ENCODE measurements at regions of chr6 and their contacts with region 1.

Region 1: GRCh38 chr6:15621203-15622044 is 41.4 kb downstream of the DTNBP1 start:
- DNase-seq: peak; percentile 37 to 96 (median 64)
- ATAC-seq: peak; percentile 99
- H3K4me3 ChIP-seq: no peak overlapping the region
- H3K27ac ChIP-seq: peak overlapping the region; percentile 85
- H3K4me1 ChIP-seq: peaks cover 4 to 33% of the 10 kb centered on the region in 2 experiments
- H3K27me3 ChIP-seq: no peaks in the 10 kb centered on the region
- CTCF ChIP-seq: no peak
- EP300 ChIP-seq: peak; percentile 39; the same call in 1 of the 2 replicates
- POLR2A ChIP-seq: peak; percentile 78
- RAD21 ChIP-seq: peak in 1 of 2 experiments; percentile 51; a peak in 2 of 4 replicates

Region 2: GRCh38 chr6:15399641-15400470 is 221.6 kb before region 1 on chr6:
- CTCF ChIA-PET with region 1: no interaction called
- POLR2A ChIA-PET with region 1: no interaction called
- in situ Hi-C with region 1: no loop called
- intact Hi-C with region 1: loop called (anchors 2 kb)
- DNase-seq: peak; percentile 82 to 91 (median 86)
- ATAC-seq: peak; percentile 83
- H3K4me3 ChIP-seq: peak overlapping the region; percentile 29
- H3K27ac ChIP-seq: peak overlapping the region; percentile 64
- H3K4me1 ChIP-seq: peaks cover 13 to 63% of the 10 kb centered on the region in 2 experiments; a peak in 4 of 5 replicates
- H3K27me3 ChIP-seq: no peaks in the 10 kb centered on the region
- CTCF ChIP-seq: no peak
- EP300 ChIP-seq: peak; percentile 37; the same call in 1 of the 2 replicates
- POLR2A ChIP-seq: no peak
- RAD21 ChIP-seq: no peak

Region 3: GRCh38 chr6:15516018-15516375 is 105.4 kb before region 1 on chr6:
- CTCF ChIA-PET with region 1: no interaction called
- POLR2A ChIA-PET with region 1: no interaction called
- in situ Hi-C with region 1: no loop called
- intact Hi-C with region 1: loop called (anchors 1 kb)
- DNase-seq: no peak
- ATAC-seq: no peak
- H3K4me3 ChIP-seq: no peak overlapping the region
- H3K27ac ChIP-seq: no peak overlapping the region
- H3K4me1 ChIP-seq: peaks cover 0 to 27% of the 10 kb centered on the region in 2 experiments; a peak in 2 of 5 replicates
- H3K27me3 ChIP-seq: no peaks in the 10 kb centered on the region
- CTCF ChIP-seq: peak in 1 of 3 experiments; percentile 14; a peak in 1 of 6 replicates
- EP300 ChIP-seq: no peak
- POLR2A ChIP-seq: no peak
- RAD21 ChIP-seq: peak in 1 of 2 experiments; percentile 48; a peak in 2 of 4 replicates

Region 4: DNA sequence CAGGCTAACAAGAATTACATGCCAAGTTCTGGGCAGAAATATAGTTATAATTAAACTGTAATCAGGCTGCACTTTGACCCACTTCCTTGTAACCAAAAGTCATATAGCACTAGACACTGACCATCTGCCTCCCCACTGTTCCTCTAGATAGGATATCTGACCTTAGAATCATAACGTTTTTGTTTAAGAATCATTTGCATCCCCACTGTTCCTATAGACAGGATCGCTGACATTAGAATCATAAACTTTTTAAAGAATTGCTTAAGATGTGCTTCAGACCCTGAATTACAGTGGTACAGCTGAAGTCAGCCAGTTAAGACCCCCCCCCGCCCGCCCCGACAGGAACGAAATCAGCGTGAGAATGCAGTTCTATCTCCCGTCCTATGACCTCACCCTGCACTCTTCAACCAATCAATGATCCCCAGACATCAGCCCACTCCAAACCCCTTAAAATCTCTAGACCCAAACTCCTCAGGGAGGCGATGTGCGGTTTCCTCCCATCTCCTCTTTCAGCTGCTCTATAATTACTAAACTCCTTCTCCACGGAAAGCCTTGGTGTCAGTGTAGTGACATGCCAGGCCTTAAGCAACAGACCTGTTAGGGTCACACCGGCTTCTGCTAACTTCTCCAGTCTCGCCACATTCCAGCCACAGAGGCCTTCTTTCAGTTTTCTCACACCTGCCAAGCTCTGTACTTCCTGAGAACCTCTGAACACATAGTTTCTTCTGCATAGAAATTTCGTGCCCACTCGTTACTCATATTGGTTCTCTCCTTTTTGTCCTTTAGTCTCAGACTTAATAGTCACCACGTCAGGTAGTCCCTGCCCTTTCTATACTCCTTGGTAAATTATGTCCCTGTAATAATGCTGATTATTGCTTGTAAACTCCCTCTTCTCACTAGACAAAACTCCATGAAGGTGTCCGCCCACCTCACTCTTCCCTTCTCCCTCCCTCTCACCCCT is 52.1 kb before region 1 on chr6:
- CTCF ChIA-PET with region 1: no interaction called
- POLR2A ChIA-PET with region 1: no interaction called
- in situ Hi-C with region 1: no loop called
- intact Hi-C with region 1: loop called (anchors 1 kb)
- DNase-seq: peak; percentile 78 to 91 (median 86)
- ATAC-seq: peak; percentile 98
- H3K4me3 ChIP-seq: no peak overlapping the region
- H3K27ac ChIP-seq: peak overlapping the region; percentile 92
- H3K4me1 ChIP-seq: peaks cover 6 to 28% of the 10 kb centered on the region in 2 experiments; a peak in 4 of 5 replicates
- H3K27me3 ChIP-seq: no peaks in the 10 kb centered on the region
- CTCF ChIP-seq: peak in 1 of 3 experiments; percentile 25; a peak in 1 of 6 replicates
- EP300 ChIP-seq: peak; percentile 58
- POLR2A ChIP-seq: peak; percentile 67
- RAD21 ChIP-seq: peak in 1 of 2 experiments; percentile 48; a peak in 2 of 4 replicates

Measured in K562 (cell line).